ENCODE measurements at regions of chr12 and their contacts with region 1.

Region 1: DNA sequence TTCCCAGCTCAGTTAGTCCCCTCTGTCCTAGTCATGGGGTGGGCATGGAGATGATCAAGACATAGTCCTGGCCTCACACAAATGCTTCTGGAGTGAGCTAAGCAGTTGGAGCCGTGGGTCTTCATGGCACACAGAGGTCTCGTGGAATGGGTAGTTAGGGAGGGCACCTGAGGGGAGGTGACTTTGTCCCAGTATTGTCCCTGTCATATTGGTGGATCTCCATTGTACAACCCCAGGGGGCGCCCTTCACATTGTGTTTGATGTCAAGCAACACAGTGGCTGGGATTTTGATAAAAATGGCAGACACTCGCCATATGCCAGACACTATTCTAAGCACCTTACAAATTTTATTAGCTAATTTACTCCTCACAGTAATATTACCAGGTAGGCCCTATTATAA is 175.4 kb upstream of the LHX5 start:
- DNase-seq: peak in 2 of 4 experiments; percentile 28 to 71
- ATAC-seq: peak; percentile 33; the same call in 1 of the 3 replicates
- H3K4me3 ChIP-seq: no peak overlapping the region
- H3K27ac ChIP-seq: no peak overlapping the region
- H3K4me1 ChIP-seq: peaks cover 20 to 29% of the 10 kb centered on the region in 2 experiments
- H3K27me3 ChIP-seq: no peaks in the 10 kb centered on the region
- CTCF ChIP-seq: peak; percentile 47 to 64 (median 59)
- EP300 ChIP-seq: no peak
- POLR2A ChIP-seq: no peak
- RAD21 ChIP-seq: peak; percentile 46 to 75

Region 2: GRCh38 chr12:113462117-113462774 is 184.8 kb before region 1 on chr12:
- CTCF ChIA-PET with region 1: no interaction called
- POLR2A ChIA-PET with region 1: no interaction called
- in situ Hi-C with region 1: no loop called
- intact Hi-C with region 1: loop called (anchors 5 kb)
- DNase-seq: peak; percentile 78 to 90 (median 84)
- ATAC-seq: peak; percentile 94
- H3K4me3 ChIP-seq: no peak overlapping the region
- H3K27ac ChIP-seq: no peak overlapping the region
- H3K4me1 ChIP-seq: peaks cover 0 to 44% of the 10 kb centered on the region in 2 experiments; a peak in 3 of 5 replicates
- H3K27me3 ChIP-seq: peaks cover 30 to 53% of the 10 kb centered on the region in 2 experiments
- CTCF ChIP-seq: peak; percentile 90 to 95 (median 95)
- EP300 ChIP-seq: no peak
- POLR2A ChIP-seq: no peak
- RAD21 ChIP-seq: peak; percentile 73 to 92

Region 3: GRCh38 chr12:113577464-113578129 is 69.5 kb before region 1 on chr12:
- CTCF ChIA-PET with region 1: no interaction called
- POLR2A ChIA-PET with region 1: no interaction called
- in situ Hi-C with region 1: no loop called
- intact Hi-C with region 1: no loop called
- DNase-seq: peak in 1 of 4 experiments; percentile 26
- ATAC-seq: no peak
- H3K4me3 ChIP-seq: no peak overlapping the region
- H3K27ac ChIP-seq: no peak overlapping the region
- H3K4me1 ChIP-seq: peaks cover 8 to 13% of the 10 kb centered on the region in 2 experiments; a peak in 4 of 5 replicates
- H3K27me3 ChIP-seq: peaks cover 18 to 38% of the 10 kb centered on the region in 2 experiments
- CTCF ChIP-seq: no peak
- EP300 ChIP-seq: no peak
- POLR2A ChIP-seq: no peak
- RAD21 ChIP-seq: no peak

Region 4: GRCh38 chr12:113794774-113795173 is 147.7 kb after region 1 on chr12:
- CTCF ChIA-PET with region 1: no interaction called
- POLR2A ChIA-PET with region 1: no interaction called
- in situ Hi-C with region 1: no loop called
- intact Hi-C with region 1: loop called (anchors 10 kb)
- DNase-seq: peak; percentile 70 to 89 (median 79)
- ATAC-seq: peak; percentile 77
- H3K4me3 ChIP-seq: no peak overlapping the region
- H3K27ac ChIP-seq: no peak overlapping the region
- H3K4me1 ChIP-seq: peaks cover 44 to 45% of the 10 kb centered on the region in 2 experiments
- H3K27me3 ChIP-seq: no peaks in the 10 kb centered on the region
- CTCF ChIP-seq: no peak
- EP300 ChIP-seq: peak; percentile 66; the same call in 1 of the 2 replicates
- POLR2A ChIP-seq: no peak
- RAD21 ChIP-seq: 0 out of 4 replicates have a peak, but pooled peaks of 1 of the 2 experiments have one; percentile 5

Region 5: GRCh38 chr12:113912760-113913329 is 265.8 kb after region 1 on chr12:
- CTCF ChIA-PET with region 1: no interaction called
- POLR2A ChIA-PET with region 1: no interaction called
- in situ Hi-C with region 1: no loop called
- intact Hi-C with region 1: loop called (anchors 1 kb)
- DNase-seq: peak; percentile 79 to 81 (median 80)
- ATAC-seq: peak; percentile 96
- H3K4me3 ChIP-seq: no peak overlapping the region
- H3K27ac ChIP-seq: no peak overlapping the region
- H3K4me1 ChIP-seq: peaks cover 0 to 3% of the 10 kb centered on the region in 2 experiments; a peak in 1 of 5 replicates
- H3K27me3 ChIP-seq: no peaks in the 10 kb centered on the region
- CTCF ChIP-seq: peak; percentile 88 to 93 (median 93)
- EP300 ChIP-seq: no peak
- POLR2A ChIP-seq: no peak
- RAD21 ChIP-seq: peak; percentile 89 to 93